Naive thymus-derived CD4-positive, alpha-beta T cell (primary cell): ENCODE measurements at regions of chr4 and their contacts with region 1.

Region 1: DNA sequence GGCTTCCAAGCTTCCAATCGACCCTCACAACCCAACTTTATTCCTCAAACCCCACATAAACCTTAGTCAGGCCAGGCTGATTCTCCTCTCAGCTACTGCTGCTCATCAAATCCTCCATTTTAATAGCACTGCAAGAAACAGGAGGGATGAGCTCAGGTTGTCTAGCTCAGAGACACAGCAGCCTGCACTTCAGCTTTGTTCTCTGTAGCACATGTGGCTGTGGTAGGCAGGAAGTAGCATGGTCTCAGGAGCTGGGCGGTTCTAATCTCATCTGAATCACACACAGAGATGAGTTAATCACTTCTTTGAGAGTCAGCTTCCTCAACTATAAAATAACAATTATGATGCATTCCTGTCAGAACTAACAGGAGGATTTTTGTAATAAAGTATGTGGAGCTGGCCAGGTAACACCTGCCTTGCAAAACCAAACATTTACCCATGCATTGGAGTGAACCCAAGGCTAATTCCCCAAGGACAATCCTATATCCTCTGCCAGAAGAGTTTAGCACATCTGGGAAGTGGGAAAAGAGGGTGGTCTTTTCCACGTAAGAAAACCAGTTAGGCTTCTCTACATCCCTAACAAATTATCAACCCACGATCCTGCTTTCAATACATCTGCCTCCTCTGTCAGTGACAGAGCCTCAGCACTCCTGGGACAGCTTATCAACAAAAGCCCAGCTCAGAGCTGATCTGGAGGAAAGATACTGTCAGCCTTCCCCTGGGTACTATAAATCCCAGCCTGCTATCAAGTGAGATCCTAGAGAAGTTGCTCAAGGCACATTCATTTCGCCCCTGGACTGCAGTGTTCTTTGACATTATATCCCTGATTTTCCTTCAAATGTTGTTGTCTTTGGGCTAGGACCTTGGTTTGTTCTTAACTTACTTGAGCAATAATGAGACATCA is 32.8 kb downstream of the ELOVL6 start:
- DNase-seq: peak; percentile 12 to 79 (median 69)
- ATAC-seq: peak; percentile 99
- H3K4me3 ChIP-seq: no peak overlapping the region
- H3K4me3 Mint-ChIP-seq: peak overlapping the region; percentile 42 to 82 (median 68)
- H3K27ac ChIP-seq: peak overlapping the region; percentile 56
- H3K27ac Mint-ChIP-seq: peak overlapping the region; percentile 87 to 98 (median 95)
- H3K4me1 ChIP-seq: peaks cover 13 to 22% of the 10 kb centered on the region in 2 donors
- H3K4me1 Mint-ChIP-seq: peaks cover 20 to 41% (median 38%) of the 10 kb centered on the region in 7 donors
- H3K27me3 ChIP-seq: no peaks in the 10 kb centered on the region
- H3K27me3 Mint-ChIP-seq: no peaks in the 10 kb centered on the region

Region 2: GRCh38 chr4:110059556-110060191 is 106.0 kb before region 1 on chr4:
- CTCF ChIA-PET with region 1: interaction called, 3 read pairs
- POLR2A ChIA-PET with region 1: interaction called, 4 read pairs
- intact Hi-C with region 1: loop called in 1 of 2 experiments (anchors 1 kb)
- DNase-seq: no peak
- ATAC-seq: peak; percentile 70
- H3K4me3 ChIP-seq: no peak overlapping the region
- H3K4me3 Mint-ChIP-seq: peak overlapping the region in 2 of 10 donors; percentile 50 to 83
- H3K27ac ChIP-seq: no peak overlapping the region
- H3K27ac Mint-ChIP-seq: peak overlapping the region in 3 of 9 donors; percentile 19 to 92 (median 53)
- H3K4me1 ChIP-seq: peaks cover 0 to 23% of the 10 kb centered on the region in 2 donors
- H3K4me1 Mint-ChIP-seq: peaks cover 6 to 70% (median 12%) of the 10 kb centered on the region in 7 donors
- H3K27me3 ChIP-seq: no peaks in the 10 kb centered on the region
- H3K27me3 Mint-ChIP-seq: no peaks in the 10 kb centered on the region

Region 3: DNA sequence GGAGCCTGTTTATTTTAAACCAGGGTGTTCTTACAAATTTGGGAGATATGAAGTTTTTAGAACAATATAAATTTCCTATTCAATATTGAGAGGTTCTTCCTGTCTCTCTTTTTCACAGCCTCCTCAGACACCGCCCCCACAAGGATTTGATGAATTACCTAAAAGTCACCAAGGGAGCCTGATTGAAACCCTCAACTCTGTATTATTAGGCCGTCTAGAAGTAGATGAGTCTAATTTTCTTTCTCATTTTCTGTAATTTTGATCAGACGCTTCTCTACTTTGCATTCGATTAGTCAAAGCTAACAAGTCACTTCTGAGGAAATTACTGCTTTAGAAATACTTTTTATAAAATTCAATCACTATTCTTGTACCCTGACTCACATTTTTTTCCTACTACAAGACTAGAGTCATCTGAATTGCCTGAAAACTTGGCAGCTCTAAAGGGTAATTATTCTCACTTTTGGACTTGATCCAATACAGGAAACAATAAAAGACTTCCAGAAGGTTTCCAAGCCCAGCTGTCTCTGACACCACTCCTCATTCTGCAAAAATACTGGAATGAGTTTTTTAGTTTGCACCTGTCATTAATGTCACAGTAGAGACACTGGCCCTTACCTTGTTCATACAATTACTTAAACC is 78.4 kb before region 1 on chr4:
- CTCF ChIA-PET with region 1: no interaction called
- POLR2A ChIA-PET with region 1: interaction called, 5 read pairs
- intact Hi-C with region 1: loop called (anchors 1 to 2 kb)
- DNase-seq: no peak
- ATAC-seq: no peak
- H3K4me3 ChIP-seq: no peak overlapping the region
- H3K4me3 Mint-ChIP-seq: no peak overlapping the region
- H3K27ac ChIP-seq: no peak overlapping the region
- H3K27ac Mint-ChIP-seq: peak overlapping the region in 1 of 9 donors; percentile 48
- H3K4me1 ChIP-seq: peaks cover 0 to 11% of the 10 kb centered on the region in 2 donors
- H3K4me1 Mint-ChIP-seq: peaks cover 13 to 62% (median 29%) of the 10 kb centered on the region in 7 donors
- H3K27me3 ChIP-seq: no peaks in the 10 kb centered on the region
- H3K27me3 Mint-ChIP-seq: no peaks in the 10 kb centered on the region

Region 4: DNA sequence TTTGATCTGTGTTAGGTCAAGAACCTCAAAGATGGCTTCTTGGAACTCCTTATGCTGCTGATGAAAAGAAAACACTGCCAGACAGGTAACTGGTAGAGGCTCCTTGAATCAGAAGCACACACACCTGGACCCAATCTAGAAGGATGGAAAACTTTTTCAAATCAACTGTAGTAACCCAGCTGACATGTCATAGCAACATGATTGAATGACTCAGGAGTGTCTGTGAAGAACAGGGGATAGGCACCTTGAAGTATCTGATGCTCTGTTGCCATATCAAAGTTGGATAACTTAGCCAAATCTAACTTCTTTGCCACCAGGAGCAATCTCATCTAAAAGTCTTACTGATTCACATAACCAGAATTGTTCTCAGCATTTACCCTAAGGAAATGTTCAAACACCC is 66.0 kb before region 1 on chr4:
- CTCF ChIA-PET with region 1: no interaction called
- POLR2A ChIA-PET with region 1: no interaction called
- intact Hi-C with region 1: no loop called
- DNase-seq: no peak
- ATAC-seq: no peak
- H3K4me3 ChIP-seq: no peak overlapping the region
- H3K4me3 Mint-ChIP-seq: no peak overlapping the region
- H3K27ac ChIP-seq: no peak overlapping the region
- H3K27ac Mint-ChIP-seq: no peak overlapping the region
- H3K4me1 ChIP-seq: no peaks in the 10 kb centered on the region
- H3K4me1 Mint-ChIP-seq: peaks cover 0 to 18% (median 0%) of the 10 kb centered on the region in 7 donors
- H3K27me3 ChIP-seq: no peaks in the 10 kb centered on the region
- H3K27me3 Mint-ChIP-seq: no peaks in the 10 kb centered on the region

Region 5: DNA sequence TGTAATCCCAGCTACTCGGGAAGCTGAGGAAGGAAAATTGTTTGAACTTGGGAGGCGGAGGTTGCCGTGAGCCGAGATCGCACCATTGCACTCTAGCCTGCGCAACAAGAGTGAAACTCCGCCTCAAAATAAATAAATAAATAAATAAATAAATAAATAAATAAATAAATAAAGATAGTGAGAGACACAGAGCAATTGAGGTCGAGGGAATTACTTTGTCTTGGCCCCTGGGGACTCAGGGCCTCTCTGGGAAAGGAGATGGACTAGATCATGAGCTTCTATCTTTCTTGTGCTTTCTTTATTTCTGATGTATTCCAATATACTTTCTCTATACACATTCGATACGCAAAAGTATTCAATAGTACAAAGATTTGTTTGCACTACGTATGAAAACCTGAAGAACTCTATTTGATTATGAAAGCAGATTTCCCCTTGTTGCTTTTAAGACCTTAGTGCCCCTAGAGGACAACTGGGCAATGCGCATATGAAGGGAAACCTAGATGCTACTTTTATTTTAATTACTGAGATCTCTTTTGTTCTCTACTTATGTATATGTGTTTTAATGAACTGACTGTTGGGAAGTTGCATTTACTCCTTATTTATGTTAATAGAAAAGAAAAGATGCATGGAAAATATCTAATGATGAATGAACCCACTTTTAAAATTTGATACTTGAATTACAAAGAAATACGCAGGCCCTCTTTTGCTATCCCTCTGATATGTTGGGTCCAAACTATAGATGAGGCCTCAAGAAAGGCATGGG is 45.6 kb after region 1 on chr4:
- CTCF ChIA-PET with region 1: no interaction called
- POLR2A ChIA-PET with region 1: no interaction called
- intact Hi-C with region 1: loop called (anchors 1 to 5 kb)
- DNase-seq: peak in 7 of 9 donors; percentile 15 to 59 (median 45)
- ATAC-seq: peak; percentile 78
- H3K4me3 ChIP-seq: no peak overlapping the region
- H3K4me3 Mint-ChIP-seq: peak overlapping the region in 2 of 10 donors; percentile 25 to 29
- H3K27ac ChIP-seq: no peak overlapping the region
- H3K27ac Mint-ChIP-seq: peak overlapping the region in 1 of 9 donors; percentile 25
- H3K4me1 ChIP-seq: no peaks in the 10 kb centered on the region
- H3K4me1 Mint-ChIP-seq: peaks cover 0 to 5% (median 0%) of the 10 kb centered on the region in 7 donors
- H3K27me3 ChIP-seq: no peaks in the 10 kb centered on the region
- H3K27me3 Mint-ChIP-seq: peaks cover 0 to 7% (median 0%) of the 10 kb centered on the region in 5 donors